Activated B cell treated with CpG ODN at 0.5 μM for 24 hours (primary cell): ENCODE measurements at regions of chr6 and their contacts with region 1.

Region 1: DNA sequence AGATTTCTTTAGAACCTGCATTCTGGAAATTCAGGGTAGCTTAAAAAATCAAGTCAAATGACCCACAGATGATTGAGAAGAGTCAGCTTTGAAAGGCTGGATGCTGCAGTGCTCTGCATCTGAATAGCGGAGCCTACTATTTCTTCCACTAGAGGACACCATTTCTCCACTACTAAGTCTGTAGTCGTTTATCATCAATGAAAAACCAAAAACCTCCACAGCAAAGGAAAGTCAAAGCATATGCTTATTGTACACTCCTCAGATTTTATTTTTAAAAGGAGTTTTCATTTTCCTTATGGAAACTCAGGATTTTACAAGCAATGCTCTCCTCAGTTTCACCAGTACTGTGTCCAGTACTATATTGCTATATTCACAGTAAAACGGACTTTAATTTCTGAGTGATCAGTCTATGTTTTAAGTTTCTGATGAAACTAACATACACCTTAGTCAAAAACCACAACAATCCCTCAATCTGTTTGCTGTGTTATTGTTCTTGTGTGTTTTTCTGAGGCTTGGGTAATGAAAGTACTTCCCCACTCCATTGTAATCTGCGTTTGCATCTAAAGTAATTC is 50.5 kb upstream of the ENPP5 start:
- DNase-seq: no peak
- ATAC-seq: peak; percentile 48
- H3K4me3 Mint-ChIP-seq: peak overlapping the region; percentile 73
- H3K27ac Mint-ChIP-seq: peak overlapping the region; percentile 93
- H3K4me1 Mint-ChIP-seq: peaks cover 59% of the 10 kb centered on the region
- H3K27me3 Mint-ChIP-seq: no peaks in the 10 kb centered on the region
- CTCF ChIP-seq: no peak

Region 2: DNA sequence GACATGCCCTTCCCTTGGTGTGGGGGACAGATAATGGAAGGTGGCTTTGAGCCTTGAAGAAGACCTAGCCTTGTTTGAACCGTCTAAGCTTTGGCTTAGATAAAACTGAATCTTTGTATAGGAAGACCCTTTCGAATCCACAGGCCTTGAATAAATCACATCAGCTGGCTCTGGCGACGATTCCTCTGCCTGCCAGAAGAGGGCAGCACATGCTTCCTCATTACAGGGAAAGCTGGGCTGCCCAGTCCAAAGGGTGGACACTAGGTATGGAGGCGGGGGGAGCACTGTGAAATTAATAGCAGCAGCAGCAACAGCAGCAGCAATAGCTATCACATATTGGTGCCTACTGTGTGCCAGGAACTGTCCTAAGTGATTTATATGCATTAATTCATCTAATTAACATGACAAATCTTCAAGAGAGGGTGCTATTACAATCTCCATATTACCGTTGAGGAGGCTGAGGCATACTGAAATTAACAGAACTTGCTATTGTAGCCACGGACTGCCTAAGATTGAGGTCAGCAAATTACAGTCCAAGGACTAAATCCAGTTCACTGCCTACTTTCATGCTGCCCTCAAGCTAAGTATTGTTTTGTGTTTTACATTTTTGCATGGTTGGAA is 290.8 kb before region 1 on chr6:
- CTCF ChIA-PET with region 1: interaction called, 7 read pairs
- POLR2A ChIA-PET with region 1: no interaction called
- intact Hi-C with region 1: loop called (anchors 1 kb)
- DNase-seq: peak; percentile 25
- ATAC-seq: peak; percentile 45
- H3K4me3 Mint-ChIP-seq: no peak overlapping the region
- H3K27ac Mint-ChIP-seq: no peak overlapping the region
- H3K4me1 Mint-ChIP-seq: no peaks in the 10 kb centered on the region
- H3K27me3 Mint-ChIP-seq: peaks cover 2% of the 10 kb centered on the region
- CTCF ChIP-seq: peak; percentile 99

Region 3: GRCh38 chr6:46129629-46130511 is 91.4 kb before region 1 on chr6 and contains the start of gene ENPP4:
- CTCF ChIA-PET with region 1: interaction called, 9 read pairs
- POLR2A ChIA-PET with region 1: interaction called, 49 read pairs
- intact Hi-C with region 1: loop called (anchors 1 kb)
- DNase-seq: peak; percentile 76
- ATAC-seq: peak; percentile 99
- H3K4me3 Mint-ChIP-seq: peak within 1 kb of the TSS; percentile 95
- H3K27ac Mint-ChIP-seq: peak within 1 kb of the TSS; percentile 87
- H3K4me1 Mint-ChIP-seq: peaks cover 48% of the 10 kb centered on the region
- H3K27me3 Mint-ChIP-seq: no peaks in the 10 kb centered on the region
- CTCF ChIP-seq: no peak
- total RNA-seq, gene ENPP4: 13.0 and 13.6 TPM in 2 replicates

Region 4: GRCh38 chr6:46376562-46377061 is 155.3 kb after region 1 on chr6:
- CTCF ChIA-PET with region 1: interaction called, 19 read pairs
- POLR2A ChIA-PET with region 1: interaction called, 4 read pairs
- intact Hi-C with region 1: loop called (anchors 1 kb)
- DNase-seq: peak; percentile 17
- ATAC-seq: peak; percentile 89
- H3K4me3 Mint-ChIP-seq: peak overlapping the region; percentile 69
- H3K27ac Mint-ChIP-seq: peak overlapping the region; percentile 86
- H3K4me1 Mint-ChIP-seq: peaks cover 77% of the 10 kb centered on the region
- H3K27me3 Mint-ChIP-seq: no peaks in the 10 kb centered on the region
- CTCF ChIP-seq: no peak

Region 5: DNA sequence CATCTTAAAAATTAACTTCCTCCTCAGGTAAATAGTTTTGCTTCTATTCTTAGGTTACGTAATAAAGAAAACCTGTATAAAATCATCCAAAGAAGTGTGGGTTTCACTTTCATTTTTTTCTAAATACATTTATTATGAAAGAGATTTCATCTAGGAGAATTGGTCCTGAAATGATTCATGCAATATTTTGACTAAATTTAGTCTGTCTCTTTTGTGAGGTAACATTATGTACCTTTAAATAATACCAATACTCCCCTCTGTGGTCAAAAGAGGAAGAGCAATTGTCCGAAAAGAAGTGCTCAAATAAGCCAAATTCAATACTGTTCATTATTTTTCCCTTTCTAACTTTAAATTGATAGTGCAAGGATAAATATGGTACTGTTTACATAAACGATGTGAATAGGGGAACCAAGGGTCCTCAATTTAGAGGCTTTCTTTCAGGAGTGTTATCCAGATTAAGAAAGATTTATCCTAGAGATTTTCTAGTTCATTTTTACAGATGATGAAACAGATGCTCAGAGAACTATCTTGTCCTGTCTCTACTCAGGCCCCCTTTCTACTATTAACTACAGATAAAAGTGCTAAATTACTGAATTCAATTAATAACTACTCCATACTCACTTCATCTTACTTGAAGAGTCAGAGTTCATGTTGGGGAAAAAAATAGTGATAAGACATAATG is 405.1 kb after region 1 on chr6:
- CTCF ChIA-PET with region 1: no interaction called
- POLR2A ChIA-PET with region 1: no interaction called
- intact Hi-C with region 1: loop called (anchors 1 kb)
- DNase-seq: no peak
- ATAC-seq: peak; percentile 54
- H3K4me3 Mint-ChIP-seq: no peak overlapping the region
- H3K27ac Mint-ChIP-seq: no peak overlapping the region
- H3K4me1 Mint-ChIP-seq: peaks cover 7% of the 10 kb centered on the region
- H3K27me3 Mint-ChIP-seq: peaks cover 4% of the 10 kb centered on the region
- CTCF ChIP-seq: no peak

Region 6: DNA sequence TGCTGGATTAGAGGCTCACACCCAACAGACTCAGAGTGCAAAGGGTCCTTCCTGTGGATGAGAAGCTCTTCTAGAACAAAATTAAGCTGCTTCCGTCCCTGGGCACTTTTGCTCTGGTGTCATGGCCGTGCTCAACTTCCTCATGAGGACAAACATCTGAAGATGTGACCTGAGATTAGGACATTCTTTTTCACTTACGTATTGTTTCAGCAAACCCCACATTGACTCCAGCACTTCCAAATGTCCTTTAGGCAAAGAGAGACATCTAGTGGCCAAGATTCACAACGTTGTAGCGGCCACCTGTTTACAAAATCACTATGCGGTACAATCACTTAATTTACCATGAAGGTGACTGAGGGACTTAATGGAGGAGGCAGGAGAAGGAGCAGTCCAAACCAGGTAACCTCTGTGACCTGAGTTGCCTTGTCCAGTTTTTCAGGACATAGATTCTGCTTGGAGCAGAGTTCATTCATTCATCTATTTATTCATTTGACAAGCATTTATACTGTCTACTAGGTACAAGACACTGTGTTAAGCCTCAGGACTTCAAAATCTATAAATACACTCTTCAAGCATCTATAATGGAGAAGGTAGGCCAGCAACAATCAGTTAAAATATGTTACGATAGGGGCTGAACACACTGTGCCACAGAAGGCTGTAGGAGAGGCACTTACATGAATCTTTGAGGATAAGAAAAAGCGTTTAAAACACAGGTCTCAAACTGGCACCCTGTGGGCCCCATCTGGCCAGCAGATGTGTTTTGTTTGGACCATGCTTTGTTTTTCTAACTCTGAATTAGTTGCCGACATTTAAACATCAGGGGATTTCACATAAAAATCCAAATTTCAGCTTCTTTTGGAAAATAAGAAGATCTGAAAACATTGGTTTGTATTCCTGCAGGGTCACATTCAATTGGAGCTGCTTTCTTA is 826.4 kb after region 1 on chr6:
- CTCF ChIA-PET with region 1: no interaction called
- POLR2A ChIA-PET with region 1: no interaction called
- intact Hi-C with region 1: loop called (anchors 5 kb)
- DNase-seq: no peak
- ATAC-seq: no peak
- H3K4me3 Mint-ChIP-seq: no peak overlapping the region
- H3K27ac Mint-ChIP-seq: no peak overlapping the region
- H3K4me1 Mint-ChIP-seq: no peaks in the 10 kb centered on the region
- H3K27me3 Mint-ChIP-seq: peaks cover 7% of the 10 kb centered on the region
- CTCF ChIP-seq: no peak